RWPE1 (cell line): ENCODE measurements at regions of chr10 and their contacts with region 1.

Region 1: DNA sequence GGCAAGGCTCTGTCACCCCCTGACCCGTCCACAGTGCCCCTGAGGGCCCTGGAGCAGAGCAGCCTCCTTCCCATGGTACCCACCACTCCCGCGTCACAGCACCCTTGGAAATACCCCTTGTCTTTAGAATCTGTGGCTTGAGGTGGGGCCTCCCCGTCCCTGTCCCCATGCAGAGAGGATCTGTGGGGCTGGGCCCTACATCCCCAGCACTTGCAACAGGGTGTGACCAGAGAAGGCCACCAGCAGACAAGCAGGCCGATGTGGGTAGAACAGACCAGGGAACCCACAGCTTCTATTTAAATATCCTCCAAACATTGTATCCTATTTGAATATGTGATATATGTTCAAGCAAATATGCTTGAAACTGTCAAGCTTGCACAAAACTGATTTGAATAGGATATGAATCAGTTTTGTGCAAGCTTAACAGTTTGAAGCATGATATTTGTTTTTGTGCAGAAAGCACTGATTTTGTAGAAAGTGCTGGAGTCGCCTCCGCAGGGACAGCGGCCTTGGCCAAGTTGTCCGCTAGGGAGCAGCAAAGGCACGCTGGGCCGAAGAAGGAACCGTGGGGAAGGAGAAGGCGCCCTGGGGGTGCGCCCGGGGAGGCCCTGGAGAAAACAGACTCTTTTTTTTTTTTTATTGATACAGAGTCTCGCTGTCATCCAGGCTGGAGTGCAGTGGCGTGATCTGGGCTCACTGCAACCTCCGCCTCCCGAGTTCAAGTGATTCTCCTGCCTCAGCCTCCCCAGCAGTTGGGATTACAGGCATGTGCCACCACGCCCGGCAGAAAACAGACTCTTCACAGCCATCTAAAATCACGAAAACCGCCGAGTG is 2.2 kb downstream of the CFAP46 start:
- DNase-seq: peak; percentile 50
- H3K27ac ChIP-seq: no peak overlapping the region
- CTCF ChIP-seq: peak; percentile 29

Region 2: DNA sequence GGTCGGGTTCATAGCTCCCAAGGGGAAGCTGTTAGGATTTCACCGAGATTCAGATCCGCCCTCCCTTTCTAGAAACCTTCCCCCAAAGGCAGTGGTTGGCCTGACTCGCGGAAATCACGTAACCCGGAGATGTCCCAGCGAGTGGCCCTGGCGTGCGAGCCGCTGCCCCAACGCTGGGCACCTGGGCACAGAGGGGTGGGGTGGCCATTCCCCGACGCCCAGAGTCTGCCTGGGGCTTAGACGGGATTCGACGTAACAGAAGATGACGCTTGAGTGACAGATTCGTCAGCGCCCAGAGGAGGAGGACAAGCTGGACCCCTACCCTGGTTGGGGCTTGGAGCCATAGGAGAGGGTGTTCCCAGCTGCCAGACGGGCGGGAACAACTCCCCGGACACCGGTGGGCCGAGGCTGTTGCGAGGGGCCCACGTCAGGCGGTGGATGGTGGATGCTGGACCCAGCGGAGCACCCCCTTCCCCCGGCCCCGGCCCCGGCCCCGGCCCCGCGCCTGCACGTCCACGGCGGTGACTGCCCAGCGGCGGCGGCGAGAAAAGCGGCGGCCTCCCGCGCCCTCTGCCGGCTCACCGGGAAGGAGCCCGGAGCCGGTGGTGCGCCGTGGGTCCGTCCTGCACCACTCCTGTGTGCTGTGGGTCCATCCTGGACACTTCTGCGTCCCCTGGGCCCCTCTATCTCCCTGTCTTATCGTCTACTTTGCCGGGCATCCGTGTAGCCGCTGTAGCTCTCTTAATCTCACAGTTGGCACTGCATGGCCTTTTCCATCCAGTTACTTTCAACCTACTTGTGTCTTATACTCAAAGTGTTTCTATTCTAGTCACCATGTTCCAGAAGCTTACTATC is 184.4 kb after region 1 on chr10:
- CTCF ChIA-PET with region 1: interaction called, 13 read pairs
- POLR2A ChIA-PET with region 1: no interaction called
- DNase-seq: peak; percentile 45
- H3K27ac ChIP-seq: no peak overlapping the region
- CTCF ChIP-seq: no peak